ENCODE measurements at regions of chr4 and their contacts with region 1.

Region 1: GRCh38 chr4:87103691-87104187 is 116.7 kb downstream of the KLHL8 start:
- DNase-seq: no peak
- ATAC-seq: peak; percentile 57
- H3K4me3 Mint-ChIP-seq: no peak overlapping the region
- H3K27ac Mint-ChIP-seq: no peak overlapping the region
- H3K4me1 Mint-ChIP-seq: peaks cover 18% of the 10 kb centered on the region
- H3K27me3 Mint-ChIP-seq: no peaks in the 10 kb centered on the region

Region 2: GRCh38 chr4:87093443-87094123 is 10.2 kb before region 1 on chr4:
- CTCF ChIA-PET with region 1: interaction called, 17 read pairs
- DNase-seq: peak; percentile 49
- ATAC-seq: peak; percentile 76
- H3K4me3 Mint-ChIP-seq: no peak overlapping the region
- H3K27ac Mint-ChIP-seq: no peak overlapping the region
- H3K4me1 Mint-ChIP-seq: peaks cover 7% of the 10 kb centered on the region
- H3K27me3 Mint-ChIP-seq: no peaks in the 10 kb centered on the region

Region 3: DNA sequence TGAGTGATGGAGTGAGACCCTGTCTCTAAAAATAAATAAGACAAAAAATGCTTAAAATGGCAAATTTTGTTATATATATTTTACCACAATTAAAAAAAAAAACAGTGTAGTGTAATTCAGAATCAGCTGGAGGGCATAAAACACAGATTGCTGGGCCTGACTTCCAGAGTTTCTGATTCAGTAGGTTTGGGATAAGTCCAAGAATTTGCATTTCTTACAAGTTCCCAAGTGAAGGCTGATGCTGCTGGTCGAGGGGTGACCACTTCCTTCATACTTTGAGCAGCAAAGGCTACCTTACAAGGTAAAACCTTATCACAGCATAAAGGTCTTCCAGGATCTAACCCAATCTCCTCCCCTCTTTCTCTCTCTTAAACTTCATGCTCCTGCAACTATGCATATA is 76.0 kb after region 1 on chr4:
- CTCF ChIA-PET with region 1: no interaction called
- DNase-seq: no peak
- ATAC-seq: no peak
- H3K4me3 Mint-ChIP-seq: no peak overlapping the region
- H3K27ac Mint-ChIP-seq: no peak overlapping the region
- H3K4me1 Mint-ChIP-seq: no peaks in the 10 kb centered on the region
- H3K27me3 Mint-ChIP-seq: no peaks in the 10 kb centered on the region